ENCODE measurements at regions of chr12 and their contacts with region 1.

Region 1: GRCh38 chr12:51172515-51173431 is at the start of gene TFCP2:
- DNase-seq: peak; percentile 97 to 99
- ATAC-seq: peak; percentile 97 to 99 (median 98)
- H3K4me3 ChIP-seq: peak within 1 kb of the TSS; percentile 88
- H3K27ac ChIP-seq: peak within 1 kb of the TSS; percentile 99
- H3K4me1 ChIP-seq: peaks cover 25% of the 10 kb centered on the region
- H3K27me3 ChIP-seq: no peaks in the 10 kb centered on the region
- CTCF ChIP-seq: no peak
- total RNA-seq, gene TFCP2: 15.7 to 24.6 (median 21.2) TPM

Region 2: DNA sequence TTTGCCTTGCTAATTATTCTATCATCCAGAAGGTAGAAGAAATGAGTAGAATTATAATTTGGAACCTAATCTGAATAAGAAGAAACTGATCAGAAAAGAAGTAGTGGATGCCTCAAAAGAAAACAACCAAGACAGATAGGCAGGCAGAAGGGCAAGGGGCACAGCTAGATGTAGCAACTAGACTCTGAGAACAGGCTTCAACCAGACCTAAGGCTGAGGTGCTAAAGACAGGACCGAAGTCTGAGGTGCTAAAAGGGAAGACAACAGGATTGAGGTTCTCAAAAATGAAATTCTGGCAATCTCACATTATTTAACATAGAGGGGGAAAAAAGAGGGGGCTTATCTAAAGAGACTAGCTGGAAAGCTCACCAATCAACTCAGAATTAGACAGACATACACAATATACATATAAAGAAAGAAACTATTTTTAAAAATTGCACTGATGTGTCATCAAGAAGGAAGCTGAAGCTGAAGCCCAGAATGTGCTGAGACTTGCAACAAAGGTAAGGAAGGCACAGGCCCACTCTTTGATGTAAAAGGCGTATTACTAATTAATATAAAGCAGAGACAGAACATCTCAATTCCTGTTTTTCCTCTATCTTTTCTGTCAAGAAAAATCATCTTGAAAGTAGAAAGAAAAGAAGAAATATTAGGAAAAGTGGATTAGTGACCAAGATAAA is 45.6 kb before region 1 on chr12:
- intact Hi-C with region 1: loop called in 1 of 2 experiments (anchors 5 kb)
- DNase-seq: no peak
- ATAC-seq: peak in 3 of 4 donors; percentile 47 to 64 (median 51)
- H3K4me3 ChIP-seq: no peak overlapping the region
- H3K27ac ChIP-seq: peak overlapping the region; percentile 46
- H3K4me1 ChIP-seq: peaks cover 31% of the 10 kb centered on the region
- H3K27me3 ChIP-seq: no peaks in the 10 kb centered on the region
- CTCF ChIP-seq: no peak

Region 3: DNA sequence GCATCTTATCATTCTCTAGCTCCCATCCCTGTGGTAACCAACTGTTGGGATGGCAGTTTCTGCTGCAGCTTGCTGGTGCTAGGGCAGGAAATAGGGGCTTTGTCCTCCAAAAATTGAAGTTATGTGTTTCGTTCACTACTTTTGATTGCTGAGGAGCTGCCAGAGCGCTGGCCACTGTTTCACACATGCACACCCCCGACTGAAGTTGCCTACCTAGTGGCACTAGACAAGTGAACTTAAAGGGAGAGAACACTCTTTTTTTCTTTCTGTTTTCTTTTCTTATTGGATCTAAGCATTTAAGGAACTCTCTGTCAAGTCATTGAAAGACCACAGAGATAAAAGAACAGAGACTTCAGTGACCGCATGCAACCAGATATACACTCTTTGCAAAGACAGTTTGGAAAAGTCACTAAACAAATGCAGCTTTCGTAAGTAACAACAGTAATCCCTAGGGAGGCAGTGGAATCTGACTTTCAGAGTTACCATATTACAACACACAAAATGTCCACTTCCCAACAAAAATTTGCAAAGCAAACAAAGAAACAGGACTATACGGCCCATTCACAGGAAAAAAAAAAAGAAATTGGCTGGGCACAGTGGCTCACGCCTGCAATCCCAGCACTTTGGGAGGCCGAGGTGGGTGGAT is 11.8 kb before region 1 on chr12:
- intact Hi-C with region 1: no loop called
- DNase-seq: no peak
- ATAC-seq: no peak
- H3K4me3 ChIP-seq: no peak overlapping the region
- H3K27ac ChIP-seq: no peak overlapping the region
- H3K4me1 ChIP-seq: peaks cover 6% of the 10 kb centered on the region
- H3K27me3 ChIP-seq: no peaks in the 10 kb centered on the region
- CTCF ChIP-seq: no peak

Region 4: GRCh38 chr12:51281202-51281924 is 108.6 kb after region 1 on chr12:
- intact Hi-C with region 1: no loop called
- DNase-seq: no peak
- ATAC-seq: no peak
- H3K4me3 ChIP-seq: no peak overlapping the region
- H3K27ac ChIP-seq: no peak overlapping the region
- H3K4me1 ChIP-seq: no peaks in the 10 kb centered on the region
- H3K27me3 ChIP-seq: peaks cover 0 to 9% (median 0%) of the 10 kb centered on the region in 3 donors
- CTCF ChIP-seq: no peak

Region 5: DNA sequence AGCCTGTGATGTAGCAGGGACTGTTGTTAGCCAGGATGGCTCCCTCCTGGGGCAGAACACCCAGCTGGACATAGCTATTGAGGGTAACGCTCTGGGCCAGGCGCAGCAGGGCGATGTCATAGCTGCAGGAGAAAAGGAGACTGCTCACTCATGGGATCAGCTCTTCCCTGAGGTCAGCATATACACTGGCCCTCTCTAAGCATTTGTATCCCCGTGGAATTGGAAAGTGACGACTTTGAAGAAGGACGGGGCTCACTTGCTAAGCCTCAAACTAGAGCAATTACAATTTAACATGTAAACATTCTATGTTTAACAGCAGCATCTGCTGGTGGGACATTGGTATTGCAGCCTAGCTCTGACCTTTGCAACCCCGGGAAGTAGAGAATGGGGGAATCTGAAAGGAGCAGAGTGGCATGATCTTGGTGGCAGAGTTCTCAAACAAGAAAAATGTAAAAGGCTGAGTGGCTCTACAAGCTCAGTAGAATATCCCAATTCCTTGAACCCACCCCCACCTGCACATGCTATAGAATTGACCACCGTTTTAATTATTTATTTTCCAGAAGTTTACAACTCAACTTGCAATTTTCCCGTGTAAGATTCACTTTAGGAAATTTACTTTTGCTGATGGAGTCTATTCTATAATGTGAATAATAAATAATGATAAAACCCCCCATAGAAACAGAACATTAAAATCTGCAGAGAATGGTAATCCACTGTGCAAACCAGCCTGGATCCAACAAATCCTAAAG is 168.7 kb after region 1 on chr12:
- intact Hi-C with region 1: no loop called
- DNase-seq: peak; percentile 41 to 73
- ATAC-seq: peak; percentile 80 to 96 (median 88)
- H3K4me3 ChIP-seq: peak overlapping the region; percentile 48
- H3K27ac ChIP-seq: no peak overlapping the region
- H3K4me1 ChIP-seq: no peaks in the 10 kb centered on the region
- H3K27me3 ChIP-seq: no peaks in the 10 kb centered on the region
- CTCF ChIP-seq: peak; percentile 97